ENCODE measurements at regions of chr2 and their contacts with region 1.

Region 1: DNA sequence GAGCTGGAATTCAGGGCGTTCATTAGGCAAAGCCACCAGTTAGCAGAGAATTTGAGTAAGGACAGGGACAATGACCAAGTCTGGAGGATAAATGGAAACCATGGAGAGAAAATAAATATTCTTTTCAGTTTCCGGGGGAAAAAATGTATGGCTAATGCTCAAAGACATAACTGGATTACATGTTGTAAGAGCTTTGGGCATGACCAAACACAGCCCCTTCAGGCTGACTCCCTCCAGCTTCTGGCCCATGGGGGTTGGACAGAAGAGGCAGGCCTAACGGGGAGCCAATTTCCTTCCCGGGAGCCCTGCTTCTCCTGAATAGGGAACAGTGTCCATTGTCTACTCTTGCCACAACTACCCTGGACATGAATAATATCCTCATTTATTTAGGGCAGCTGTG is 39.5 kb upstream of the FOXI3 start:
- DNase-seq: no peak
- H3K4me3 ChIP-seq: no peak overlapping the region
- H3K27ac ChIP-seq: no peak overlapping the region
- H3K4me1 ChIP-seq: peaks cover 3% of the 10 kb centered on the region; the same call in 1 of the 2 replicates
- H3K27me3 ChIP-seq: no peaks in the 10 kb centered on the region
- CTCF ChIP-seq: no peak

Region 2: DNA sequence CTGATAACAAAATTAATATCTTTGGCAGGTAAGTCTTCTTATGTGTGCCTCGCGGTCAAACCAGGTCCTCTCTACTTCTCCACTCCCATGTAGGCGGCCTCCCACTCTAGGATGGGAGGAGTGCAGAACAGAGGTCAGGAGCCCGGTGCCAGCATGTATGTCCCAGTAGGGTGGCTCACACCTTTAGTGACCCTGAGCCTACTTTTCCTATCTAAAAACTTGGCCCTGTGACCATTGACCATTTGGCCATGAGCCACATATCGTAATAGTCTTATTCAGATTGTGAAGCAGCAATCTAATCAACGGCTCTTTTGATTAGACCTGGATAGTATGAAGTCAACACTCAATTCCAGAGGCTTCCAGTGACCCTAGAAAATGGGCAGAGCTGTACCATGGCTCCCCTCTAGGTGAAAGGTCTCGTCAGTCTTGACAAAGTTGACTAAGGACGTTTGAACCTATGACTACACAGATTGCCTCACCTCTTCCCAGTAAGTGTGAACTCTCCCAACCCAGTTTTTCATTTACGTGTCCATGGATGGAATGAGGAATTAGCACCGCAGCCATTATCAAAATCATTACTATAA is 347.0 kb before region 1 on chr2:
- CTCF ChIA-PET with region 1: no interaction called
- POLR2A ChIA-PET with region 1: no interaction called
- intact Hi-C with region 1: no loop called
- DNase-seq: no peak
- H3K4me3 ChIP-seq: no peak overlapping the region
- H3K27ac ChIP-seq: no peak overlapping the region
- H3K4me1 ChIP-seq: no peaks in the 10 kb centered on the region
- H3K27me3 ChIP-seq: peaks cover 43% of the 10 kb centered on the region
- CTCF ChIP-seq: no peak

Region 3: GRCh38 chr2:88606371-88607030 is 114.5 kb after region 1 on chr2:
- CTCF ChIA-PET with region 1: no interaction called
- POLR2A ChIA-PET with region 1: interaction called, 16 read pairs
- intact Hi-C with region 1: no loop called
- DNase-seq: no peak
- H3K4me3 ChIP-seq: no peak overlapping the region
- H3K27ac ChIP-seq: no peak overlapping the region
- H3K4me1 ChIP-seq: peaks cover 25% of the 10 kb centered on the region
- H3K27me3 ChIP-seq: no peaks in the 10 kb centered on the region
- CTCF ChIP-seq: no peak

Measured in PC-9 (cell line).